Mammary epithelial cell (primary cell): ENCODE measurements at regions of chr2 and their contacts with region 1.

Region 1: GRCh38 chr2:238060542-238061314 is at the start of gene SCLY:
- DNase-seq: peak; percentile 99
- H3K4me3 ChIP-seq: peak within 1 kb of the TSS; percentile 90 to 97 (median 92)
- H3K27ac ChIP-seq: peak within 1 kb of the TSS; percentile 72
- H3K4me1 ChIP-seq: peaks cover 12% of the 10 kb centered on the region
- H3K27me3 ChIP-seq: no peaks in the 10 kb centered on the region
- CTCF ChIP-seq: no peak
- total RNA-seq, gene SCLY: 10.5 to 23.8 TPM

Region 2: GRCh38 chr2:238145851-238146250 is 85.1 kb after region 1 on chr2:
- CTCF ChIA-PET with region 1: no interaction called
- dilution Hi-C with region 1: no loop called
- in situ Hi-C with region 1: no loop called
- intact Hi-C with region 1: loop called (anchors 1 kb)
- DNase-seq: no peak
- H3K4me3 ChIP-seq: no peak overlapping the region
- H3K27ac ChIP-seq: no peak overlapping the region
- H3K4me1 ChIP-seq: peaks cover 31% of the 10 kb centered on the region
- H3K27me3 ChIP-seq: no peaks in the 10 kb centered on the region
- CTCF ChIP-seq: no peak

Region 3: DNA sequence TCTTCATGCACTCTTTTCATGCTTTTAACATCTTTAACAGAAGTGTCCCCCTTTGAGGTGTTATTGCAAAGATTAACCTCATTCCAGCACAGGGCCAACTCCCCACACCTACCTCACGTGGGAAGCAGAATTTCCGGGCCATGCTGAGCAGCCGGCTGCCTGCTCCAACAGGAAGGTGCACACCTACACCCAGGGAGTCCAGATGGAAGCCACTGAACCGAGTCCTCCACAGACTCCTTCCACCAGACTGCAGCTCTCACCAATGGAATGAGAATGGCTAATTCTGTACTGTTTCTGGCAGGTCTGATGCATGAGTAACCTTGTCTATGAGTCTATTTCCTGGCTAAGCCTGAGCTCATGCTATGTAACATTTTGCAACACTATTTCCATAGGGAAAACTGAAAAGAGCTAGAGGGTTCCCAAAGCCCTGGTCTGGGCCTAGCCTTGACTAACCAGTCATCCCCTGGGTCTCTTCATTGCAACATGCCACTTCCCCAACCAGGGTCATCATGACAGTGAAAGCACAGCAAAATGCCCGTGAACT is 109.1 kb after region 1 on chr2:
- CTCF ChIA-PET with region 1: no interaction called
- dilution Hi-C with region 1: no loop called
- in situ Hi-C with region 1: no loop called
- intact Hi-C with region 1: loop called (anchors 1 kb)
- DNase-seq: peak; percentile 92
- H3K4me3 ChIP-seq: no peak overlapping the region
- H3K27ac ChIP-seq: peak overlapping the region; percentile 79
- H3K4me1 ChIP-seq: peaks cover 28% of the 10 kb centered on the region
- H3K27me3 ChIP-seq: no peaks in the 10 kb centered on the region
- CTCF ChIP-seq: no peak

Region 4: GRCh38 chr2:238203094-238203972 is 142.6 kb after region 1 on chr2 and contains the start of gene ILKAP:
- CTCF ChIA-PET with region 1: no interaction called
- dilution Hi-C with region 1: no loop called
- in situ Hi-C with region 1: no loop called
- intact Hi-C with region 1: loop called (anchors 2 kb)
- DNase-seq: peak; percentile 80
- H3K4me3 ChIP-seq: peak within 1 kb of the TSS; percentile 70 to 98 (median 83)
- H3K27ac ChIP-seq: peak within 1 kb of the TSS; percentile 69
- H3K4me1 ChIP-seq: peaks cover 13% of the 10 kb centered on the region
- H3K27me3 ChIP-seq: no peaks in the 10 kb centered on the region
- CTCF ChIP-seq: no peak
- total RNA-seq, gene ILKAP: 16.7 to 52.7 TPM

Region 5: GRCh38 chr2:238239872-238240751 is 179.4 kb after region 1 on chr2 and contains the start of gene HES6:
- CTCF ChIA-PET with region 1: no interaction called
- dilution Hi-C with region 1: no loop called
- in situ Hi-C with region 1: no loop called
- intact Hi-C with region 1: loop called (anchors 10 kb)
- DNase-seq: peak; percentile 84
- H3K4me3 ChIP-seq: peak within 1 kb of the TSS in 2 of 3 experiments; percentile 59 to 73
- H3K27ac ChIP-seq: no peak within 1 kb of the TSS
- H3K4me1 ChIP-seq: peaks cover 9% of the 10 kb centered on the region
- H3K27me3 ChIP-seq: peaks cover 2% of the 10 kb centered on the region
- CTCF ChIP-seq: no peak
- total RNA-seq, gene HES6: 1.2 to 5.0 TPM